Motor neuron (in vitro differentiated cells): ENCODE measurements at regions of chr3 and their contacts with region 1.

Region 1: GRCh38 chr3:186277268-186277909 is 84.6 kb downstream of the DGKG start:
- ATAC-seq: peak in 7 of 8 experiments; percentile 44 to 99 (median 67)
- H3K4me3 ChIP-seq: no peak overlapping the region
- H3K27ac ChIP-seq: no peak overlapping the region
- H3K4me1 ChIP-seq: no peaks in the 10 kb centered on the region

Region 2: GRCh38 chr3:185912929-185913901 is 364.2 kb before region 1 on chr3:
- in situ Hi-C with region 1: no loop called
- ATAC-seq: peak in 3 of 8 experiments; percentile 7 to 34 (median 20)
- H3K4me3 ChIP-seq: no peak overlapping the region
- H3K27ac ChIP-seq: no peak overlapping the region
- H3K4me1 ChIP-seq: no peaks in the 10 kb centered on the region

Region 3: DNA sequence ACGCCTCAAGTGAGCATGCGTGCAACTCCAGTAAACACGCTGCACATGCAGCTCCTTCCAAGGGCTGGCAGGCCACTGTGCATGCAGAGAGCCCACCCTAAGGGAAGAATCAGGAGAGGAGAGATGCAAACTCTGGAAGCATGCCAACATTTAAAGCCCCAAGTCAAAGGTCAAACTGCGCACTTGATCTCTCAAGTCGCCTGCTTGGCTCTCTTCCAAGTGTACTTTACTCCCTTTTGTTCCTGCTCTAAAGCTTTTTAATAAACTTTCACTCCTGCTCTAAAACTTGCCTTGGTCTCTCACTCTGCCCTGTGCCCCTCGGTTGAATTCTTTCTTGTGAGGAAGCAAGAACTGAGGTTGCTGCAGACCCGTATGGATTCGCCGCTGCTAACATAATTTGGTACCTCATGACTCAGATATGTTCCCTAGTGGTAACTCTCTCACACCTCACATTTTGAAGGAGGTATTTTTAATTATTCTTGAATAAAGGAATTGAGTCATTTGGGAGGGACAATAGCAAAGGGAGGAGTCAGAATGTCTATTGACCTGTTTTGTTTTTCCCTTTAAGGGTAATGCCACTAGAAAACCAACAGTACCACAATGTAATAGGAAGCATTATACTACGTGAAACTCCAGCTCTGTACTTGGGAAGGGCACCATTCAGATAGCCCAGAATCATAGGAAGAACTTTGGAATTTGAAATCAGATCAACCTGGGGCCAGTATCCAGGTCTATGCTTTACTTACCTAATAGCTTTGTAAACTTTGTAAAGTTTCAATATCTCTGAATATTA is 104.2 kb after region 1 on chr3:
- in situ Hi-C with region 1: no loop called
- ATAC-seq: peak in 2 of 8 experiments; percentile 54 to 72
- H3K4me3 ChIP-seq: no peak overlapping the region
- H3K27ac ChIP-seq: no peak overlapping the region
- H3K4me1 ChIP-seq: no peaks in the 10 kb centered on the region

Region 4: DNA sequence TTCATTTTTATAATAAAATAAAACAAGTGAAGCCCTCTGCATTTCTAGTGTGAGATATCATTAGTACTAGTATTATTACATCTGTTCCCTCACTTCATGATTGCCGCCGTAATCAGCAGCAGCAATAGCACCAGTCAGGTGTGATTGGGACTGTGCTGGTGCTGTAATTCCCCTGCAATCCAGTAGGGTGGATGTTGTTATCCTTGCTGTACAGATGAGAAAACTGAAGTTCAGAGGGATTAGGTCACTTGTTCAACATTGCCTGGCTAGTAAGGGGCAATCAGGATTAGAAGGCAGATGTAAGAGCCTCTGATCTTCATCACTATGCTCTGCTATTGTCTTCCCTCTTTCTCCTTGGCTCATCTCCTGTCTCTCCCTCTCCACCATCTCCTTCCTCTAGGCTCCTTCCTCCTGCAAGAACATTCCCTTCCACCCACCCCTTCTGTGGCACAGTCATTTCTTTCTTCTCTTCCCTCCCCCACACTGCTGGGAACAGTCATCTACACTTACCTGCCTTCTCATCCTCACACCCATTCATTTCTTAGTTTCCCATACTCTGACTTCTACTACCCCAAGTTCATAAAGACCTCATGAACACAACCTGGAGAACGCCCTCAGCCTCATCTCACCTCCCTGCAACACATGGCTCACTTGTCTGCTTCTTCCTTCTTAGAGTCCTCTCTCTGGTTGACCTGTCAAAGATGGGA is 237.1 kb after region 1 on chr3:
- in situ Hi-C with region 1: loop called in 1 of 9 experiments (anchors 25 kb)
- ATAC-seq: peak in 2 of 8 experiments; percentile 32 to 54
- H3K4me3 ChIP-seq: no peak overlapping the region
- H3K27ac ChIP-seq: no peak overlapping the region
- H3K4me1 ChIP-seq: peaks cover 25 to 27% of the 10 kb centered on the region in 2 donors

Region 5: GRCh38 chr3:186534113-186534669 is 256.8 kb after region 1 on chr3:
- in situ Hi-C with region 1: loop called in 4 of 9 experiments (anchors 10 to 25 kb)
- ATAC-seq: no peak
- H3K4me3 ChIP-seq: no peak overlapping the region
- H3K27ac ChIP-seq: no peak overlapping the region
- H3K4me1 ChIP-seq: peaks cover 8 to 12% of the 10 kb centered on the region in 2 donors

Region 6: DNA sequence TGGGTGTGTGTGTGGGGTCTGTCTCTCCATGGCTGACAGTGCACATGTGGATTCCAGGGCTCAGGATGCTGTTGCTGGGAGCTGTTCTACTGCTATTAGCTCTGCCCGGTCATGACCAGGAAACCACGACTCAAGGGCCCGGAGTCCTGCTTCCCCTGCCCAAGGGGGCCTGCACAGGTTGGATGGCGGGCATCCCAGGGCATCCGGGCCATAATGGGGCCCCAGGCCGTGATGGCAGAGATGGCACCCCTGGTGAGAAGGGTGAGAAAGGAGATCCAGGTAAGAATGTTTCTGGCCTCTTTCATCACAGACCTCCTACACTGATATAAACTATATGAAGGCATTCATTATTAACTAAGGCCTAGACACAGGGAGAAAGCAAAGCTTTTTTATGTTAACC is 575.6 kb after region 1 on chr3:
- in situ Hi-C with region 1: no loop called
- ATAC-seq: no peak
- H3K4me3 ChIP-seq: no peak overlapping the region
- H3K27ac ChIP-seq: no peak overlapping the region
- H3K4me1 ChIP-seq: no peaks in the 10 kb centered on the region